Naive thymus-derived CD4-positive, alpha-beta T cell (primary cell): ENCODE measurements at regions of chrX and their contacts with region 1.

Region 1: DNA sequence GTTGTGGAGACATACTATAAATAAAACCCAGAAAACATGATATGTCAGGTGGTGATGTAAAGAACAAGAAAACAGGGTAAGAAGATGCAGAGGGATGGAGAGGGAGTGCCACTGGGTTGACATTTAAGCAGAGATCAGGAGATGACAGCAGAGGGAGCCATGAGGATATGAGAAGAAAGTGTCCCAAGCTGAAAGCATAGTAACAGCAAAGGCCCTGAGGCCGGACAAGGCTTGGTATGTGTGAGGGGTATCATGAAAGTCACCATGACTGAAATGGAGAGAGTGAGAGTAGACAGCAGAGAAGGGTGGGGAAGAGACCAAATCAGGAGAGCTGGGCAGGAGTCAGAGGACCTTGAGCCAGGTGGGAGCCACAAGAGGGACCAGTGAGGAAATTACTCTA is 3.4 kb downstream of the GPKOW start:
- DNase-seq: no peak
- ATAC-seq: no peak
- H3K4me3 ChIP-seq: no peak overlapping the region
- H3K4me3 Mint-ChIP-seq: peak overlapping the region in 3 of 10 donors; percentile 9 to 24 (median 12)
- H3K27ac ChIP-seq: no peak overlapping the region
- H3K27ac Mint-ChIP-seq: peak overlapping the region in 2 of 9 donors; percentile 12 to 30
- H3K4me1 ChIP-seq: peaks cover 16 to 18% of the 10 kb centered on the region in 2 donors
- H3K4me1 Mint-ChIP-seq: peaks cover 32 to 59% (median 37%) of the 10 kb centered on the region in 7 donors
- H3K27me3 ChIP-seq: no peaks in the 10 kb centered on the region
- H3K27me3 Mint-ChIP-seq: no peaks in the 10 kb centered on the region

Region 2: DNA sequence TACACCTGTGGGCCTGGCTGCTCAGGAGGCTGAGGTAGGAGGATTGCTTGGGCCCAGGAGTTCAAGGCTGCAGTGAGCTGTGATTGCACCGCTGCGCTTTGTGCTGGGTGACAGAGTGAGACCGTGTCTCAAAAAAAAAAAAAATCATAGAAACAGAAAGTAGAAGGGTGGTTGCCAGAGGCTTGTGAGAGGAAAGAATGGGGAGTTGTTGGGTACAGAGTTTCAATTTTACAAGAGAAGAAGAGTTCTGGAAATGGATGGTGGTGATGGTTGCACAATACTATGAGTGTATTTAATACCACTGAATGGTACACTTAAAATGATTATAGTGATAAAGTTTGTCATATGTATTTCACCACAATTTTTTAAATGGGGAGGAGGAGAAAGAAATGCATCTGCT is 368.8 kb before region 1 on chrX:
- CTCF ChIA-PET with region 1: no interaction called
- POLR2A ChIA-PET with region 1: no interaction called
- intact Hi-C with region 1: no loop called
- DNase-seq: no peak
- ATAC-seq: no peak
- H3K4me3 ChIP-seq: no peak overlapping the region
- H3K4me3 Mint-ChIP-seq: peak overlapping the region in 2 of 10 donors; percentile 8 to 32
- H3K27ac ChIP-seq: no peak overlapping the region
- H3K27ac Mint-ChIP-seq: peak overlapping the region in 2 of 9 donors; percentile 43 to 80
- H3K4me1 ChIP-seq: no peaks in the 10 kb centered on the region
- H3K4me1 Mint-ChIP-seq: peaks cover 0 to 9% (median 5%) of the 10 kb centered on the region in 7 donors
- H3K27me3 ChIP-seq: no peaks in the 10 kb centered on the region
- H3K27me3 Mint-ChIP-seq: no peaks in the 10 kb centered on the region

Region 3: DNA sequence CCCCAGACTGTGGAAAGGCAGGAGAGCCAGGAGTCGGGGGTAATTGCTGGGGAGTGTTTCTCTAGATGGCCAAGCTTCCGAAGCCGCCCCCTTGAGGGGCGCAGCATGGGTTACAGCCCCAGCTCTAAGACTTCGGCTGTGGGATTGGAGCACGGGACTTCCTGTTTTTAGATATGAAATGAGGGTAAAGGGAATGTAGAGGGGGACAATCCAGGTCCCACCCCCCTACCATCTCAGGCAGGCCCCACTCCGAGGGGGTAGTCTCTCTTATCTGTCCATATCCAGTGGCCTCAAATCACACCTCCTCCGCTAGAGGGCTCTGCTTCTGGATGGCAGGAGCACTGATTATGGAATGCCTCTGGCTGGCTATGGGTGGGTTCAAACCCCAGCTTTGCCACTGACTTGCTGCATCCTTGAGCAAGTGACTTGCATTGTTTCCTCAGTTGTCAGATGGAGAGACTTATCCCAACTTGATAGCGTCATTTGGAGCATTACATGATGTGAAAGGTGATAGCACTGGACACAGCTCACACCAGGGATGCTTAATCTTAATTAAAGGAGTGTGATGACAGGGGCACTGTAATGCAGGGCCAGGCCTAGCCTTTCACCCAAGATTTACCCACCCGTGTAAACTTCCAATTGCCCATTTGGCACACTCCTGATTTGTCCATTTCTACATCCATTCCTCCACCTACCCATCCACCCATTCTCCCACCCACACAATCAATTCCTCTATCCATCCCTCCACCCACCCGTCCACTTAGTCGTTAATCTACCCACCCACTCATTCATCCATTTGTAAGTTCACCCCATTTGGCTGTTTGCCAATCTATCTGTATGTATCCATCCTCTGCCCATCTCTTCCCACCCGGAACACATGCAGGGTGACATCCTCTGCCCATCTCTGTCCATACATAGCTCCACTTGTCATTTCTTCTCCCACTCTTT is 147.6 kb before region 1 on chrX:
- CTCF ChIA-PET with region 1: interaction called, 3 read pairs
- POLR2A ChIA-PET with region 1: no interaction called
- intact Hi-C with region 1: loop called in 1 of 2 experiments (anchors 1 kb)
- DNase-seq: peak in 4 of 9 donors; percentile 17 to 28 (median 22)
- ATAC-seq: peak; percentile 74
- H3K4me3 ChIP-seq: peak overlapping the region; percentile 30
- H3K4me3 Mint-ChIP-seq: peak overlapping the region in 9 of 10 donors; percentile 12 to 72 (median 57)
- H3K27ac ChIP-seq: no peak overlapping the region
- H3K27ac Mint-ChIP-seq: no peak overlapping the region
- H3K4me1 ChIP-seq: peaks cover 0 to 8% of the 10 kb centered on the region in 2 donors
- H3K4me1 Mint-ChIP-seq: peaks cover 6 to 17% (median 12%) of the 10 kb centered on the region in 7 donors
- H3K27me3 ChIP-seq: no peaks in the 10 kb centered on the region
- H3K27me3 Mint-ChIP-seq: no peaks in the 10 kb centered on the region

Region 4: GRCh38 chrX:49073601-49074571 is 46.2 kb before region 1 on chrX and contains the start of gene PRAF2:
- CTCF ChIA-PET with region 1: no interaction called
- POLR2A ChIA-PET with region 1: interaction called, 4 read pairs
- intact Hi-C with region 1: loop called (anchors 1 kb)
- DNase-seq: peak; percentile 60 to 90 (median 86)
- ATAC-seq: peak; percentile 99
- H3K4me3 ChIP-seq: peak within 1 kb of the TSS; percentile 61
- H3K4me3 Mint-ChIP-seq: peak within 1 kb of the TSS; percentile 73 to 88 (median 83)
- H3K27ac ChIP-seq: peak within 1 kb of the TSS; percentile 78
- H3K27ac Mint-ChIP-seq: peak within 1 kb of the TSS; percentile 66 to 91 (median 86)
- H3K4me1 ChIP-seq: peaks cover 4 to 10% of the 10 kb centered on the region in 2 donors
- H3K4me1 Mint-ChIP-seq: peaks cover 9 to 25% (median 16%) of the 10 kb centered on the region in 7 donors
- H3K27me3 ChIP-seq: no peaks in the 10 kb centered on the region
- H3K27me3 Mint-ChIP-seq: no peaks in the 10 kb centered on the region
- total RNA-seq, gene PRAF2: 15.9 to 28.3 (median 20.4) TPM

Region 5: DNA sequence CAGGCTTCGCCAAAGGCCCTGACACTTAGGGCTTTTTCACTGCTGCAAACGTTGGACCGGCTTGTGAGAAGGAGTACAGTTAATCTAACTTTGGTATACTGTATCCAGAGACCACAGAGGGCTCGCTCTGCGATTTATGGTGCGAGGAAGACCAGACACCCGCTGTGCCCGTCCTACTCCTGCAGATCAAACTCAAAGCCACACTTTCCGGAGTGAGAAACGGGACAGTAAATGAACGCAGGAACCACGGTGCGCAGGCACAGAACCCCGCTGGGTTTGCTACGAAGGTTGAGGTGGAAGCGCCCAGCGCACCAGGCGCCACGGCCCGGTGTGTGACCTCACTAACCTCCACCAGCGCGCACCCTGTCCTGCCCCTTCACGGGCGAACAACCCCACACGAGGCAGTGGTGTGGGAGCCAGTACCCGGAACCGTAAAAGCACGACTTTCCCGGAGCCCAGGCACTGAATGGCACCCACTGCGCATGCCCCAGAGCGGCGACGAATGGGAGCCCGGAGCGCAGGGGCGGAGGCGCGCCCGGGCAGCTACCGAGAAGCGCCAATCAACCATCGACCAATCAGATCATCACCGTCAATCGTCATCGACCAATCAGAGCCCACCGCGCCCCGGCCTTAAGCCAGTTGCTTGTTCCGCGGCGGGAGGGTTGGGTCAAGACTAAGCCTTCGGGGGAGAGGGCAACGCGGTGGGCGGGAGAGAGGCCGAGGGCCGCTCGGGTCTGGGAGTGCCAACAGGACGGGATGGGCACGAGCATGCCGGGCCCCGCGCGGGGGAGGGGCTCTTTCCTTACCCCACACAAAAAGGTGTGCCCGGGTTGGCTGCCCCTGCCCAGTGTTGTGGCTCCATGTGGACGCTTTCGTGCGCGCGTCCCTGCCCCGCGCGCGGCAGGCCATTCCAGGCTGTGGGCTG is 19.1 kb before region 1 on chrX:
- CTCF ChIA-PET with region 1: no interaction called
- POLR2A ChIA-PET with region 1: interaction called, 3 read pairs
- intact Hi-C with region 1: loop called (anchors 1 kb)
- DNase-seq: peak; percentile 75 to 90 (median 87)
- ATAC-seq: peak; percentile 97
- H3K4me3 ChIP-seq: peak overlapping the region; percentile 82
- H3K4me3 Mint-ChIP-seq: peak overlapping the region; percentile 80 to 93 (median 90)
- H3K27ac ChIP-seq: peak overlapping the region; percentile 78
- H3K27ac Mint-ChIP-seq: peak overlapping the region; percentile 74 to 95 (median 91)
- H3K4me1 ChIP-seq: no peaks in the 10 kb centered on the region
- H3K4me1 Mint-ChIP-seq: peaks cover 0 to 8% (median 0%) of the 10 kb centered on the region in 7 donors
- H3K27me3 ChIP-seq: no peaks in the 10 kb centered on the region
- H3K27me3 Mint-ChIP-seq: no peaks in the 10 kb centered on the region

Region 6: DNA sequence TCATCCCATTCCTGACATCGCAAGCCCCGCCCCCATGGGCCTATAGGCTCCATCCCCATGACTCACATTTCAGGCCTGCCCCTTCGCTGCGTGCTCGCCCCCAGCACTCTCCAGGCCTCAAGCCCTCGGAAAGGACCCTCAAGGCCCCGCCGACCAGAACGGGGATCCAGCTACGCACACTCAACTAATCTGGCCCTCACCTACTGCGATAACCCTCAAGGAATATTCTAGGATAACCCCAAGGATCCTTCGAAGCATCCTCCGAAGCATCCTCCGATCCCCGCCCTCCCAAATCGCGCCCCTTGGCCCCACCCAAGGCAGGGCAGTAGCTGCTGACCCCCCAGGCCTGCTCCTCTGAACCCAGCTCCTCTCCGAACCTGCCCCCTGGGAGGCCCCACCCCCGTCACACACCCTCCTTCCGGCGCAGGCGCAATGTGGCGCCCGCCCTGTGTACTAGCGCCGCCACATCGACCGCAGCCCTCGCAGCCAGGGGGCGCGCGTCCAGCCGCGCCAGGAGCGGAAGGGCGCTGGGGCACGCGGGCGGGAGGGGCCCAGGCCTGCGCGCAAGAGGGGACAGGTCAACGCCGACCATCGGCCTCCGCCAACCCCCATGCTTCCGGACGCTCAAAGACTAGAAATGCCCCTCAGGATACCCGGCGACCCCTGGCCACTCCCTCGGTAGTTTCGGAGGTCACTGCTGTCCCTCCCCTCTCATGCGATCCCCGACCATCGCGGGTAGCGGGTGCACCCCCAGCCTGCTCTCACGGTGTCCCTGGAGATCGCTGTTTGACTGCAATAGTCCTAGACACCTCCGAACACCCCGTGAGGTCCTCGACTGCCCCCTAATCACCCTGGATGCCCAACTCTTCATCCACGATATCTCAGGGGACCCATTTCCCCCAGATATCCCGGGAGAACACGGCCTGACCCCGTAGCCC is 36.1 kb after region 1 on chrX:
- CTCF ChIA-PET with region 1: no interaction called
- POLR2A ChIA-PET with region 1: interaction called, 4 read pairs
- intact Hi-C with region 1: loop called (anchors 1 kb)
- DNase-seq: peak; percentile 75 to 87 (median 85)
- ATAC-seq: peak; percentile 97
- H3K4me3 ChIP-seq: peak overlapping the region; percentile 74
- H3K4me3 Mint-ChIP-seq: peak overlapping the region; percentile 93 to 99 (median 97)
- H3K27ac ChIP-seq: peak overlapping the region; percentile 91
- H3K27ac Mint-ChIP-seq: peak overlapping the region; percentile 89 to 99 (median 96)
- H3K4me1 ChIP-seq: peaks cover 0 to 6% of the 10 kb centered on the region in 2 donors
- H3K4me1 Mint-ChIP-seq: peaks cover 7 to 21% (median 13%) of the 10 kb centered on the region in 7 donors
- H3K27me3 ChIP-seq: no peaks in the 10 kb centered on the region
- H3K27me3 Mint-ChIP-seq: peaks cover 0 to 2% (median 0%) of the 10 kb centered on the region in 5 donors

Region 7: DNA sequence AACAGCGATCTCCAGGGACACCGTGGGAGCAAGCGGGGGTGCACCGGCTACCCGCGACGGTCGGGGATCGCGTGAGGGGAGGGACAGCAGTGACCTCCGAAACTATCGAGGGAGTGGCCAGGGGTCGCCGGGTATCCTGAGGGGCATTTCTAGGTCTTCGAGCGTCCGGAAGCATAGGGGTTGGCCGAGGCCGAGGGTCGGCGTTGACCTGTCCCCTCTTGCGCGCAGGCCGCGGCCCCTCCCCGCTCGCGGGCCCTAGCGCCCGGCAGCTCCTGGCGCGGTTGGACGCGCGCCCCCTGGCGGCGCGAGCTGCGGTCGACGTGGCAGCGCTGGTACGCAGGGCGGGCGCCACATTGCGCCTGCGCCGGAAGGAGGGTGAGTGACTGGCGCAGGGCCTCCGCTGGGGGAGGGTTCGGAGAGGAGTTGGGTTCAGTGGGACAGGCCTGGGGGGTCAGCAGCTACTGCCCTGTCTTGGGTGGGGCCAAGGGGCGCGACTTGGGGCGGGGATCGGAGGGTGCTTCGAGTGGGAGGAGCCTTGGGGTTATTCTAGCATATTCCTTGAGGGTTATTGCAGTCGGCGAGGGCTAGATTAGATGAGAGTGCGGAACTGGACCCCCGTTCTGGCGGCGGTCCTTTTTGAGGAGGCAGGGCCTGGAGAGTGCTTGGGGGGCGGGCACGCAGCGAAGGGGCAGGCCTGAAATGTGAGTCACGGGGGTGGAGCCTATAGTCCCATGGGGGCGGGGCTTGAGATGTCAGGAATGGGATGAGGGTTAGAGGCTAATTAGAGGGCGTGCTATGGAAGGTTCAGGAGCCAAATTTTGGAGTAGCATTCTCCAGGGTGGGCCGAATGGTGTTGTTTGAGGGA is 43.7 kb after region 1 on chrX:
- CTCF ChIA-PET with region 1: no interaction called
- POLR2A ChIA-PET with region 1: interaction called, 4 read pairs
- intact Hi-C with region 1: loop called (anchors 1 to 2 kb)
- DNase-seq: peak; percentile 71 to 84 (median 80)
- ATAC-seq: peak; percentile 74
- H3K4me3 ChIP-seq: peak overlapping the region; percentile 50
- H3K4me3 Mint-ChIP-seq: peak overlapping the region; percentile 72 to 84 (median 81)
- H3K27ac ChIP-seq: peak overlapping the region; percentile 74
- H3K27ac Mint-ChIP-seq: peak overlapping the region; percentile 79 to 97 (median 92)
- H3K4me1 ChIP-seq: peaks cover 14 to 16% of the 10 kb centered on the region in 2 donors
- H3K4me1 Mint-ChIP-seq: peaks cover 13 to 33% (median 26%) of the 10 kb centered on the region in 7 donors
- H3K27me3 ChIP-seq: no peaks in the 10 kb centered on the region
- H3K27me3 Mint-ChIP-seq: peaks cover 0 to under 1% (median 0%) of the 10 kb centered on the region in 5 donors